Cardiac septum (tissue), 1 donor: ENCODE measurements at regions of chr14 and their contacts with region 1.

Region 1: GRCh38 chr14:91177073-91178034 is 63.5 kb downstream of the DGLUCY start:
- DNase-seq: no peak

Region 2: GRCh38 chr14:90383075-90383730 is 794.2 kb before region 1 on chr14:
- intact Hi-C with region 1: loop called (anchors 10 kb)
- DNase-seq: peak; percentile 100

Region 3: GRCh38 chr14:90903101-90903500 is 274.3 kb before region 1 on chr14:
- intact Hi-C with region 1: loop called (anchors 1 kb)
- DNase-seq: no peak

Region 4: DNA sequence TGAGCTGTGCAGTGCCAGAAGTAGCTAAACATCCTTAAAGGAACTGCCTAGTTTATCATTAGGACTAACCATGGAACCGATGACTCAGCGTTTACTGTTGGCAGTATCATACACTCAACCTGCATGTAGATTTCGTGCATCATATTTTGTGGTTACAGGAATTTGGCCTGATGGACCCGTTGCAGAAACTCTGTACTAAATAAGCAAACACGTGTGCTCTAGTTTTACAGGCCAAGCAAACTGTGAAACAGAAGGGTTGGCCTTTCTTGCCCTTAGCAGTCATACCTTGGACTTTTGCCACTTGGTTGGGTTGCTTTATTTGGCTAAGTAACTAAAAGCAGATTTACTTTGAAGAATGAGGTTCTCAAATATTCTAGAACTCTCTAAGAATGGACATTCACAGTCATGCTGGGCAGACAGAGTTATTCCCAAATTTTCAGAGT is 27.9 kb before region 1 on chr14:
- intact Hi-C with region 1: no loop called
- DNase-seq: no peak

Region 5: GRCh38 chr14:91244501-91244901 is 67.1 kb after region 1 on chr14 and contains the start of gene GPR68:
- intact Hi-C with region 1: no loop called
- DNase-seq: no peak
- total RNA-seq, gene GPR68: 3.4 TPM

Region 6: GRCh38 chr14:91286530-91286937 is 109.2 kb after region 1 on chr14:
- intact Hi-C with region 1: loop called (anchors 2 kb)
- DNase-seq: peak; percentile 87